ENCODE measurements at regions of chr7 and their contacts with region 1.

Region 1: DNA sequence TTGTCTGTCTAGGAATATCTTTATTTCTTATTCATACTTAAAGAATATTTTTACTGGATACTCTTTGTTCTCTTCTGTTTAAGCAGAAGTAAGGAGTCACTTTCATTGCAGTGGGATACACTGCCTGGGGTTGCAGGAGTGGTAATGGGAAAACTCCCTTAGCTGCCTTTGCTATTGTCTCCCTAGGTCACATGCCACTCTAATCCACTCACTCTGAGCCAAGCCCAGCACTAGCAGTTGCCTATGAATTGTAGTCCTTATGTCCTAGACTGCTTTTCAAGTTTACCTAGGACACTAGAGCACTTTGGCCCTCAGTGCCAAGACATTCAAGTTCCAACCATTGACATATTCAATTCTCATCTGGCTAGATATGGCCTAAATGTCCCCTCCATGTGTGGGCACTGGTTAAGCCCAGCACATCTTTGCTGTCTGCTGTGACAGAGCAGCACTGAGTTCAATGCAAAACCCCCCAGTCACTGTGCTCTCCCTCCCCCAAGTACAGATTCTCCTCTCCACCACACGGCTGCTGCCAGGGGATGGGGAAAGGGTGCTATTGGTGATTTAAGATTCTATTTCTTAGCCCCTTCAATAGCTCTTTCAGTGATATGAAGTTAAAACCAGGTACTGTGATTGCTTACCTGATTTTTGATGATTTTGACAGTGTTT is 991.7 kb upstream of the KCND2 start:
- DNase-seq: no peak
- H3K4me3 ChIP-seq: no peak overlapping the region
- H3K27ac ChIP-seq: no peak overlapping the region
- H3K4me1 ChIP-seq: no peaks in the 10 kb centered on the region
- H3K27me3 ChIP-seq: no peaks in the 10 kb centered on the region
- CTCF ChIP-seq: no peak
- EP300 ChIP-seq: no peak
- POLR2A ChIP-seq: no peak

Region 2: GRCh38 chr7:120023494-120024167 is 742.3 kb after region 1 on chr7:
- in situ Hi-C with region 1: no loop called
- intact Hi-C with region 1: loop called (anchors 10 kb)
- DNase-seq: no peak
- H3K4me3 ChIP-seq: no peak overlapping the region
- H3K27ac ChIP-seq: no peak overlapping the region
- H3K4me1 ChIP-seq: no peaks in the 10 kb centered on the region
- H3K27me3 ChIP-seq: no peaks in the 10 kb centered on the region
- CTCF ChIP-seq: no peak
- EP300 ChIP-seq: no peak
- POLR2A ChIP-seq: no peak

Measured in transverse colon (tissue), 4 donors.